AG04450 (cell line): ENCODE measurements at regions of chr20 and their contacts with region 1.

Region 1: DNA sequence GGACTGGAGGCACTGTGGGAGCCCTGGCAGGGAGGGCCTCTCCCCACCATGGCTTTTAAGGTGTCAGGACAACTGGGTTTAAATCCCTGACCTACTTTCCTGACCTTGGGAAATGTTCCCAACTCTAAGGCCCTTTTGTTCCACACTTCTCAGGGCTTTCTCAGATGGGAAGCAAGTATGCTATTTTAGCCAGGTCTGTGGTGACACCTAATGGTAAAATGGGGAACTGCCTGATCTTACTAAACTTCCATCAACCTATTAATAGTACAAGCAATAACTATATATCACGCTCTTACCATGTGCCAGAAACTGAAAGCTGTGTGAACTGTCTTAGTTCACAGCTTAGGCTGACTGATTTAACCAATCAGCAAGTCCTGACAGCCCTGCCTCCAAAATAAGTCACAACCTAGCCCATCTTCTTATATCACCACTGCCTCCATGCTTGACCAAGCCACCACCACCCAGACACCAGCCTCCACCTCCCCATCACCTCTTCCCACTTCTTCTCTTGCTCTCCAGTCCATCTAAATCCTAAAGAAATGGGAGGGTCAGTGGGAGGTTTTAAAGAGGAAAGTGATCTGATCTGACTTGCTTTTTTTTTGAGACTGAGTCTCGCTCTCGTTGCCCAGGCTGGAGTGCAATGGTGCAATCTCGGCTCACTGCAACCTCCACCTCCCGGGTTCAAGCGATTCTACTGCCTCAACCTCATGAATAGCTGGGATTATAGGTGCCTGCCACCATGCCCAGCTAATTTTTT is 6.9 kb upstream of the BLCAP start:
- DNase-seq: no peak
- H3K4me3 ChIP-seq: no peak overlapping the region
- H3K27ac ChIP-seq: no peak overlapping the region
- H3K27me3 ChIP-seq: peaks cover 4% of the 10 kb centered on the region
- CTCF ChIP-seq: peak; percentile 88

Region 2: DNA sequence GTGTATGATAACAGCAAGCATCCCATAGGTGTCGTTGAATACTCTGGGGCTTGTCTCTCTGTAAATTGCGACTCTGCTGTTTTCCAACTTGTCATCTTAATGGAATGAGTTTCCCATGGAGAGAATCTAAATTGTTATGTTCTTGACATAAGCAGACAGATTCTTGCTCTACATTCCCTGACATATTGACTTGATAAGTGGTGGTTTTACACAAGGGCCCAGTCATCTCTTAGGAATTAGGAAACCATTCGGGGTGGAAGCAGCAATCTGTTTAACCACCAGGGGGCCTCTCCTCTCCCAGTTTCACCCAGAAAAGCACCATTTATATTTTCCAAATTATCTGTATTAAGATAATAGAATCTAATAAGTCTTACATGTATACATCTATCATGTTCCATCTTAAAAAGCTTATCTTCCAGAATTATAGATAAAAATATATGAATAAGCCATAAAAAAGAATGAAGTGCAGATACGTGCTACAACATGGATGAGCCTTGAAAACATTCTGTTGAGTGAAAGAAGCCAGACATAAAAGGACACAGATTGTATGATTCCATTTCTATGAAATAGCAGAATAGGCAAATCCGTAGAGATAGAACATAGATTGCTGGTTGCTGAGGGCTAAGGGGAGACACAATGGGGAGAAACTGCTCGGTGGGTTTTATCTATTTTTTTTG is 332.2 kb before region 1 on chr20:
- CTCF ChIA-PET with region 1: interaction called, 43 read pairs
- POLR2A ChIA-PET with region 1: no interaction called
- DNase-seq: peak; percentile 90
- H3K4me3 ChIP-seq: peak overlapping the region; percentile 36
- H3K27ac ChIP-seq: peak overlapping the region; percentile 79
- H3K27me3 ChIP-seq: no peaks in the 10 kb centered on the region
- CTCF ChIP-seq: peak; percentile 91

Region 3: DNA sequence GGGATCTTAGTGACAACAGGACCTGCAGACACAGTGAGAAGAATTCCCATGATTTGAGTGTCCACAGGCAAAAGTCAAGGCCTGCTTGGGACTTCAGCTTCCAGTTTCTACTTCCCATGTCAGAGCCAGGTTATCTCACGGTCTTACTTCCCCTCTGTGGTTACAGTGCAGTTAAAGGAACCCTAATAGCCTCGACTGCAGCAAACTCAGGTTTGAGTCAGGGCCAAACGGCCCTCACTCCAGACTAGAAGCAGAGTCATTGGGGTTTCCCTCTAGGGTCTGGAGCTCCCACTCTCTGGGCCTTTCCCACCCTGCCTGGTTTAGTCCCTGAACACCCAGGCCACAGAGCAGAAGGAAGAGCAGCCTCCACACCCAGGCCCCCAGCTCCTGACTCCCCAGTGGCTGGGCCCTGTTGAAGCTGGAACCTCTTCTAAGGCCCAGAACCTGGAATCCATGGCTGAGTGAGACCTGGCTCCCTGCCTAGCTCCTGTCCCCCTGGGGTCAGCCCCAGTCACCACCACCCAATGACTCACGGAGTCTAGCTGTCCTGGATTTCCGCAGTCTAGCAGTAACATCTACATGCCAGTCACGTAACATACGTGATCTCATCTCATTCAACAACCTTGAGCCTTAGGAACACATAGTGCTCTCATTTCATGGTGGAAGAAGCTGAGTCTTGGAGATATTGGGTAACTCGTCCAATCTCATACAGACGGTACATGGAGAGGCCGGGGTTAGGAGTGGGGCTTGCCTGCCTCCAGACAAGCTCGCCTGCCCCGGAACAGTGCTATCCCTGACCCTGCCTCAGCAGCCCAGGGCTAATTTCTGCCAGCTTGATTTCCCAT is 263.8 kb before region 1 on chr20:
- CTCF ChIA-PET with region 1: interaction called, 75 read pairs
- POLR2A ChIA-PET with region 1: no interaction called
- DNase-seq: no peak
- H3K4me3 ChIP-seq: no peak overlapping the region
- H3K27ac ChIP-seq: no peak overlapping the region
- H3K27me3 ChIP-seq: peaks cover 6% of the 10 kb centered on the region
- CTCF ChIP-seq: no peak

Region 4: GRCh38 chr20:37282556-37282955 is 252.0 kb before region 1 on chr20:
- CTCF ChIA-PET with region 1: interaction called, 25 read pairs
- POLR2A ChIA-PET with region 1: no interaction called
- DNase-seq: no peak
- H3K4me3 ChIP-seq: no peak overlapping the region
- H3K27ac ChIP-seq: peak overlapping the region; percentile 31
- H3K27me3 ChIP-seq: peaks cover 3% of the 10 kb centered on the region
- CTCF ChIP-seq: peak; percentile 71

Region 5: GRCh38 chr20:37552415-37552814 is 17.8 kb after region 1 on chr20:
- CTCF ChIA-PET with region 1: no interaction called
- POLR2A ChIA-PET with region 1: no interaction called
- DNase-seq: no peak
- H3K4me3 ChIP-seq: no peak overlapping the region
- H3K27ac ChIP-seq: no peak overlapping the region
- H3K27me3 ChIP-seq: peaks cover 12% of the 10 kb centered on the region
- CTCF ChIP-seq: no peak